ENCODE measurements at regions of chr17 and their contacts with region 1.

Region 1: DNA sequence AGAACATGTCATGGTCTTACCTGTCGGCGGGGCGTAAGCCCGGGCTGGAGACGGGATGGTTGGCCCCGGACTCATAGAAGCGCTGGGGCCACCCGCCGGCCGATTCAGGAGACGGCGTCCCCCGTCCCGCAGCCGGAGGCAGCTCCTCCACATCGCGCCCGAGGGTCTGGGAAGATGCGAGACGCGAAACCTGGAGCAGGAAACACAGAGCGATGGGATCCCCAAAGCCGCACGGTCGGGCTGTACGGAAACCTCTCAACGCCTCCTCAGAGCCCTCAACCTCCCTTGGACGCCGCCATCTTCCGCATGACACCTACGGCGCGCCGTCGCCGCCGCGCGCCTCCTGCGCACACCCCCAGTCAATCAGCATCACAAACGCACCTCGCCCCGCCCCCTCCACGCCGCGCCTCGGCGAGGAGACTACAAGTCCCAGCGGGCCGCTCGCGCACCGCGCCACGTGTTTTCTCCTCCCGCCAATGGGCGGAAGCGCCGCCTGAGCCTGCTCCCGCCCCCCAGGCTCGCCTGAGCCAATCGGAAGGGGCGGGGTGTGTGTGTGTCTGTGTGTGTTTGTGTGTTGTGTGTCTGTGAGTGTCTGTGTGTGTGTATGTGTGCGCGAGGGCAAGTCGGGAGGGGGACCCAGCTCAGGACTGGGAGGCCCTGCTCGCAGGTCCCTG is at the starts of genes ATPAF2 and GID4:
- DNase-seq: peak; percentile 99
- H3K4me3 ChIP-seq: peak within 1 kb of the TSS; percentile 63 to 98 (median 92)
- H3K4me3 Mint-ChIP-seq: peak within 1 kb of the TSS; percentile 93 to 100
- H3K27ac ChIP-seq: peak within 1 kb of the TSS; percentile 64 to 97
- H3K27ac Mint-ChIP-seq: peak within 1 kb of the TSS; percentile 89 to 96 (median 93)
- H3K4me1 ChIP-seq: peaks cover 35 to 42% of the 10 kb centered on the region in 2 donors
- H3K4me1 Mint-ChIP-seq: peaks cover 49% of the 10 kb centered on the region
- H3K27me3 ChIP-seq: no peaks in the 10 kb centered on the region
- H3K27me3 Mint-ChIP-seq: peaks cover 0 to 2% (median 0%) of the 10 kb centered on the region in 3 donors
- CTCF ChIP-seq: no peak
- polyA plus RNA-seq, gene ATPAF2: 41.3 to 50.8 (median 44.9) TPM
- polyA plus RNA-seq, gene GID4: 4.1 to 6.0 (median 4.4) TPM

Region 2: GRCh38 chr17:17681187-17681848 is 357.7 kb before region 1 on chr17 and contains the start of gene RAI1:
- intact Hi-C with region 1: loop called in 1 of 2 experiments (anchors 5 kb)
- DNase-seq: peak; percentile 64 to 72 (median 69)
- H3K4me3 ChIP-seq: peak within 1 kb of the TSS; percentile 50 to 87 (median 66)
- H3K4me3 Mint-ChIP-seq: peak within 1 kb of the TSS; percentile 90 to 92
- H3K27ac ChIP-seq: peak within 1 kb of the TSS; percentile 75 to 89
- H3K27ac Mint-ChIP-seq: peak within 1 kb of the TSS; percentile 73 to 95 (median 89)
- H3K4me1 ChIP-seq: peaks cover 15 to 35% of the 10 kb centered on the region in 2 donors
- H3K4me1 Mint-ChIP-seq: peaks cover 33% of the 10 kb centered on the region
- H3K27me3 ChIP-seq: no peaks in the 10 kb centered on the region
- H3K27me3 Mint-ChIP-seq: peaks cover 3 to 10% (median 4%) of the 10 kb centered on the region in 3 donors
- CTCF ChIP-seq: peak; percentile 78
- polyA plus RNA-seq, gene RAI1: 0.89 to 4.4 (median 1.5) TPM

Region 3: DNA sequence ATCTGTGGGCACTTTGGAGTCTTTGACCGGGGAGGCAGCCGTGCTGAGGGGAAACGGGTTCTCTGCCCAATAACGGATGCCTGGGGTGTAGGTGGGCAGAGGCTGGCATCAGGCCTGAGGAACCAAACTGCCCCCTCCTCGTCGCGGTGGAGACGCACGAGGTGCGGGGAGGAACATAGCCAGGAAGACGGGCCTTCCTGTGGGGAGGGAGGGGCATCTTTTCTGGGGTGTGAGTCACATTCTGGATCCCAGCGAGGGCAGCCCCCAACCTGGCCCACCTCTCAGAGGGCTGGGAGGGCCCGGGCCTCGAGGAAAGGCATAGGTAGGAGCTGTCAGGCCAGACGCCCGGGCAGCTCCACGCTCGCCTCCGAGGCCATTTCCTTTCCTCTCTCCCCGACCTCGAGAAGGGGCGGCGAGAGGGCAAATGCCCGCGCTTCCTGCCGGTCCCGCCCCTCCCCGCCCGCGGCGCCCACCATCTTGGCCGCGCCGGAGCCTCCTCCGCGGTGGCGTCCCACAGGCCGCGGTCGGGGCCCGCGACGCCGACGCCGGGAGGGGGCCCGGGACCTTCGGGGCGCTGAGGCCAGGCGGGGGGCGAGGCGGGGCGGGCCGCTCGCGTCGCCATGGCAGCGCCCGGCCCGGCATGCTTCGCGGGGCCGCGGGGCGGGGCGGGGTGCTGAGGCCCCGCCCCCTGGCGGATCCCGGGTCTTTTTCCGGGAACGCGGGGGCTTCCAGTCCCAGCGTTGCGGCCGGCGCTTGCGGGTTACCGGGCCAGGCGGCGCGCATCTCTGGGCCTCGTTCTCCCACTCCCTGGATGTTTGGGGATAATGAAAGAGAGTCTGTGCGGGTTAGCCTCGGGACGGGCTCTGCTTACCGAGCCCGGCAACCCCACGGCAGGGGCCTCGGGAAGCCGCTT is 344.6 kb before region 1 on chr17:
- intact Hi-C with region 1: loop called in 1 of 2 experiments (anchors 10 kb)
- DNase-seq: peak; percentile 71 to 79 (median 79)
- H3K4me3 ChIP-seq: peak overlapping the region; percentile 63 to 97 (median 87)
- H3K4me3 Mint-ChIP-seq: peak overlapping the region; percentile 86 to 91
- H3K27ac ChIP-seq: peak overlapping the region; percentile 84 to 91
- H3K27ac Mint-ChIP-seq: peak overlapping the region; percentile 94 to 99 (median 97)
- H3K4me1 ChIP-seq: peaks cover 38 to 50% of the 10 kb centered on the region in 2 donors
- H3K4me1 Mint-ChIP-seq: peaks cover 60% of the 10 kb centered on the region
- H3K27me3 ChIP-seq: peaks cover 0 to 4% of the 10 kb centered on the region in 2 donors
- H3K27me3 Mint-ChIP-seq: peaks cover 8% of the 10 kb centered on the region in 3 donors
- CTCF ChIP-seq: no peak

Region 4: DNA sequence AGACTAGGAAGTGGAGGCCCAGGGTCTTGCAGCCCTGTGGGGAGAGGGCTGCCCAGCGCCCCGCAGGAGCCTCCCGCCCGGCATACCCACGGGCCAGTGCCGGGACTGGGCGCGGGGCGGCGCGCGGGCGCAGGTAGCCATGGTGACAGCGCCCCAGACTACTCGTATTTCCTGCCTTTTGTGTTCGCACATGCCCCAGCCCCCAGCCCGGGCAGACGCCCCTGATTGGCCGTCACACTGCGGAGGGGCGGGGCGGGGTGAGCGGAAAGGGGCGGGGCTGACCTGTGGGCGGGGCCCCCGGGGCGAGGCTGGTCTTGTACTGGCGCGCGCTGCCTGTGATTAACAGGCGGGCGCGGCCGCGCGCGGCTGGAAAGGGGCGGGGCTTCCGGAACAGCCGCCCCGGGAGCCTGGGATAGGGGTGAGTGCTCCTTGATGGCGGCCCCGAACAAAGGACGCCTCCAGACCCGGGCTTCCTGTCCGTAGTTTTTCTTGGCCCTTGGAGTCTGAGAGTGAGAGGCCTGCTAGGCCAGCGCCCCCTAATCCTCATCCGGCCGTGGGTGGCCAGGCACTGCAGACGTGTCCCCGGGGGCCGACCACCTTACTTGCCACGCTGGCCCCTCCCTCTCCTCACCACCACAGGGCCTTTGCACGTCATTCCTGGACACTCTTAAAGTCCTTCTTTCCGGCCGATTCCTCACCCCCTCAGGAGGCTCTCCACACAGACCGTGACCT is 286.7 kb before region 1 on chr17:
- intact Hi-C with region 1: loop called in 1 of 2 experiments (anchors 5 kb)
- DNase-seq: peak; percentile 94 to 97 (median 94)
- H3K4me3 ChIP-seq: peak overlapping the region; percentile 70 to 79 (median 71)
- H3K4me3 Mint-ChIP-seq: peak overlapping the region; percentile 81 to 89
- H3K27ac ChIP-seq: peak overlapping the region; percentile 72 to 86
- H3K27ac Mint-ChIP-seq: peak overlapping the region; percentile 95 to 98 (median 97)
- H3K4me1 ChIP-seq: peaks cover 42 to 49% of the 10 kb centered on the region in 2 donors
- H3K4me1 Mint-ChIP-seq: peaks cover 45% of the 10 kb centered on the region
- H3K27me3 ChIP-seq: no peaks in the 10 kb centered on the region
- H3K27me3 Mint-ChIP-seq: peaks cover 3 to 7% (median 4%) of the 10 kb centered on the region in 3 donors
- CTCF ChIP-seq: peak; percentile 40

Region 5: DNA sequence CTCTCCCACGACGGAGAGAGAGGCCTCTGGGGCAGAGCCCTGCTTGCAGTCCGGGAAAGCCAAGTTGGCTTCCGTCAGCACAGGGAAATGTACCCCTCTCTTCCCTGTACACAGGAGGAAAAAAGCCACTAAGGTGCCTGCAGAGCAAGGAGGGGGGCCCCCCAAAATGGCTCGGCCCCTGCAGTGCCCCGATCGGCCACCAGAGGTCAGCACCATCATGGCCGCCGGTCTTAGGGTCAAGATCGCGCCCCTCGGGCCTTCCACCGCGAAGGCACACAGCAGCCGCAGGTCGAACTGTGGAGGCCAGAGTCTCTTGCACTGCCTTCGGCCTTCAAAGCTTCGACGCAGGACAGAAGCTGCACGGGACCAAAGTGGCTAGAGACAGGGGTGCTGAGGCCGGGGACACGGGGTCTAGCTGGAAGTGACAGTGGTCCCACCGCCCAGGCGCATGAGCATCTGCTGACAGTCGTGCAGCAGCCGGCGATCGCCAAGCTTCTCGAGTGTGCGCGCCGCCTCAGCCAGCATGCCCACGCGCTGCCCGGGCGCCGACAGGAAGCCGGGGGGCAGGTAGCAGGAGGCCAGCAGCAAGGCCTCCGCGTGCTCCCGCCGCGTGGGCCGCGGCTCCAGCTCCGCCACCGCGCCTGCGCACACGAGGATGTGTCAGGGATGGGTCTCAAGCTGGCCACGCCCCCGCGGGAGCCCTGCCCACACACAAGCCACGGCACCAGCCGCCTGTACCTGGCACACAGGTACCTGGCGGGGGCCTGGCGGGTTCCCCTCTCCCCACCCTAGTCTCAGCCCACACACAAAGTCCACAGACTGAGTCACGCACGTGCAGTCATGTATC is 226.6 kb before region 1 on chr17:
- intact Hi-C with region 1: loop called in 1 of 2 experiments (anchors 5 kb)
- DNase-seq: peak; percentile 54 to 64 (median 56)
- H3K4me3 ChIP-seq: no peak overlapping the region
- H3K4me3 Mint-ChIP-seq: no peak overlapping the region
- H3K27ac ChIP-seq: no peak overlapping the region
- H3K27ac Mint-ChIP-seq: peak overlapping the region in 2 of 7 donors; percentile 15 to 50
- H3K4me1 ChIP-seq: no peaks in the 10 kb centered on the region
- H3K4me1 Mint-ChIP-seq: no peaks in the 10 kb centered on the region
- H3K27me3 ChIP-seq: no peaks in the 10 kb centered on the region
- H3K27me3 Mint-ChIP-seq: peaks cover 0 to 3% (median 3%) of the 10 kb centered on the region in 3 donors
- CTCF ChIP-seq: peak; percentile 100

Region 6: GRCh38 chr17:18183334-18184142 is 144.5 kb after region 1 on chr17 and contains the start of gene ALKBH5:
- intact Hi-C with region 1: loop called in 1 of 2 experiments (anchors 5 kb)
- DNase-seq: peak; percentile 99 to 100 (median 99)
- H3K4me3 ChIP-seq: peak within 1 kb of the TSS; percentile 80 to 86 (median 83)
- H3K4me3 Mint-ChIP-seq: peak within 1 kb of the TSS; percentile 88 to 94
- H3K27ac ChIP-seq: peak within 1 kb of the TSS; percentile 95 to 96
- H3K27ac Mint-ChIP-seq: peak within 1 kb of the TSS; percentile 97 to 100 (median 99)
- H3K4me1 ChIP-seq: peaks cover 50 to 56% of the 10 kb centered on the region in 2 donors
- H3K4me1 Mint-ChIP-seq: peaks cover 49% of the 10 kb centered on the region
- H3K27me3 ChIP-seq: no peaks in the 10 kb centered on the region
- H3K27me3 Mint-ChIP-seq: peaks cover 0 to 2% (median 0%) of the 10 kb centered on the region in 3 donors
- CTCF ChIP-seq: peak; percentile 31
- polyA plus RNA-seq, gene ALKBH5: 50.4 to 79.1 (median 78.9) TPM